ENCODE measurements at regions of chr16 and their contacts with region 1.

Region 1: GRCh38 chr16:81366316-81366932 is 51.7 kb downstream of the GAN start:
- DNase-seq: peak in 4 of 5 donors; percentile 48 to 59 (median 54)
- H3K4me3 ChIP-seq: no peak overlapping the region
- H3K4me3 Mint-ChIP-seq: no peak overlapping the region
- H3K27ac ChIP-seq: no peak overlapping the region
- H3K27ac Mint-ChIP-seq: no peak overlapping the region
- H3K4me1 ChIP-seq: no peaks in the 10 kb centered on the region
- H3K4me1 Mint-ChIP-seq: no peaks in the 10 kb centered on the region
- H3K27me3 ChIP-seq: no peaks in the 10 kb centered on the region
- H3K27me3 Mint-ChIP-seq: no peaks in the 10 kb centered on the region

Region 2: DNA sequence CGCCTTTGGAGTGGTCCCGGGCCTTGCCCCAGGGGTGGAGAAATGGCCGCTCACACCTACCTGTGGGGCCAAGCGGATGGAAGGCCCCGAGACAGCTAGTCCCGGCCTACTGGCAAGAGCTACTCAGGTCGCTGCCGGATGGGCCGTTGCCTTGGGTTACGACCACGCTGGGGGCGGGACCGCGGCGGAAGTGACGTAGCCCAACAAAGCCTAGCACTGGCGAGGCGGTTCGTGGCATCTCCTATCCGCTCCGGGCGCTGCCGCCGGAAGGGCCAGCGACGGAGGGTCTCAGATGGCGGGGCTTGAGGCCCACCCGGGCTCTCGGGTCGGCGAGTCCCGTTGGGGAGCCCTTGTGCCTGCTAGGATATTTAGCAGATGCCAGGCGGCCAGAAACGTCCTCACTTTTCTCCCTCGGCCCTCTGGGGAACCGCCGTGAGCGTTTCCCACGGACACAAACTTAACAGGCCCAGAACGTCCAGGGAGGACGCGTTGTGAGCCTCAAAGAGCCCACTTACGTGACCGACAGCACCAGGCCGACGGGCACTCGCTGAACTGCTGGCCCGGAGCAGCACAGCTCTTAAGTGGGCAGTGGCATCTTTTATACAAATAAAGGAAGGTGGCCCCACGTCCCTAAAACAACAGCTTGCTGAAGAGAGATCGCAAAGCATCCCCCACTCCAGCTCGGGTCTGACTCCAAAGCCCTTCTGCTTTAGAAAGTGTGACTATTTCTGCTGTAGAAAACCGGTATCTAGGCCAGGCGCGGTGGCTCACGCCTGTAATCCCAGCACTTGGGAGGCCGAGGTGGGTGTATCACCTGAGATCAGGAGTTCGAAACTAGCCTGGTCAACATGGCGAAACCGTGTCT is 289.1 kb before region 1 on chr16 and contains the start of gene C16orf46:
- CTCF ChIA-PET with region 1: no interaction called
- POLR2A ChIA-PET with region 1: no interaction called
- intact Hi-C with region 1: no loop called
- DNase-seq: peak; percentile 96 to 99 (median 96)
- H3K4me3 ChIP-seq: peak within 1 kb of the TSS; percentile 59 to 75
- H3K4me3 Mint-ChIP-seq: peak within 1 kb of the TSS in 1 of 8 donors; percentile 20
- H3K27ac ChIP-seq: peak within 1 kb of the TSS; percentile 95
- H3K27ac Mint-ChIP-seq: peak within 1 kb of the TSS in 2 of 7 donors; percentile 25 to 66
- H3K4me1 ChIP-seq: peaks cover 13% of the 10 kb centered on the region
- H3K4me1 Mint-ChIP-seq: peaks cover 0 to 4% (median 1%) of the 10 kb centered on the region in 4 donors
- H3K27me3 ChIP-seq: no peaks in the 10 kb centered on the region
- H3K27me3 Mint-ChIP-seq: no peaks in the 10 kb centered on the region
- total RNA-seq, gene C16orf46: 0.29 TPM in 1 of 2 experiments, not detected in the other

Region 3: GRCh38 chr16:81403616-81404373 is 37.4 kb after region 1 on chr16:
- CTCF ChIA-PET with region 1: interaction called, 4 read pairs
- POLR2A ChIA-PET with region 1: no interaction called
- intact Hi-C with region 1: loop called (anchors 1 kb)
- DNase-seq: peak; percentile 63 to 77 (median 69)
- H3K4me3 ChIP-seq: peak overlapping the region in 1 of 2 donors; percentile 34
- H3K4me3 Mint-ChIP-seq: peak overlapping the region in 3 of 8 donors; percentile 10 to 46 (median 31)
- H3K27ac ChIP-seq: no peak overlapping the region
- H3K27ac Mint-ChIP-seq: no peak overlapping the region
- H3K4me1 ChIP-seq: peaks cover 8% of the 10 kb centered on the region
- H3K4me1 Mint-ChIP-seq: peaks cover 0 to 4% (median 0%) of the 10 kb centered on the region in 4 donors
- H3K27me3 ChIP-seq: no peaks in the 10 kb centered on the region
- H3K27me3 Mint-ChIP-seq: no peaks in the 10 kb centered on the region

Region 4: DNA sequence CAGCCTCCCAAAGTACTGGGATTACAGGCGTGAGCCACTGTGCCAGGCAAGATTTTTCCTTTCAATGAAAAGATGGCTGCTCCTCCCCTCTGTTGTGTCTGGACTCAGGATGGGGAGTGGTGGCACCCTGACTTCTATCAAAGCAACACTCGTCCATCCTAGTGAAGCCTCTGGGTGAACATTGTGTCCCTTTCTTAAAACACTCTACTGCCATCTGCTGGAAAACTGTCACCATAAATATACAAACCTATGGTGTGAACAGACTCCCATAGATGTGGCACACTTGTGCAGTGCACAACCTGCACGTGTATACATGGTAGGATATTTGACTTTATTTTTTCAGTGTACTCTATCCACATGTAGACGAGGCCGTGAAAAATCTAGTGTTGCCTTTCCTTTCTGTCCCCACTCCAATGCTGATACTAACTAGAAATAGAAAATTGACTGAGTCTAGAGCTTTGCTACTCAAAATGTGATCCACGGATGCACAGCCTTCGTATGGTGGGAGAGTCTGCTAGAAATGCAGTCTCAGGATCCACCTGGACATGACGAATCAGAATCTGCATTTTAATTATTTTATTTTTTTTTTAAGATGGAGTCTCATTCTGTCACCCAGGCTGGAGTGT is 356.8 kb after region 1 on chr16:
- CTCF ChIA-PET with region 1: interaction called, 11 read pairs
- POLR2A ChIA-PET with region 1: no interaction called
- intact Hi-C with region 1: loop called (anchors 1 kb)
- DNase-seq: peak; percentile 61 to 76 (median 73)
- H3K4me3 ChIP-seq: no peak overlapping the region
- H3K4me3 Mint-ChIP-seq: peak overlapping the region in 1 of 8 donors; percentile 52
- H3K27ac ChIP-seq: no peak overlapping the region
- H3K27ac Mint-ChIP-seq: peak overlapping the region in 4 of 7 donors; percentile 14 to 84 (median 70)
- H3K4me1 ChIP-seq: peaks cover 11% of the 10 kb centered on the region
- H3K4me1 Mint-ChIP-seq: peaks cover 11 to 29% (median 13%) of the 10 kb centered on the region in 4 donors
- H3K27me3 ChIP-seq: no peaks in the 10 kb centered on the region
- H3K27me3 Mint-ChIP-seq: no peaks in the 10 kb centered on the region

Region 5: DNA sequence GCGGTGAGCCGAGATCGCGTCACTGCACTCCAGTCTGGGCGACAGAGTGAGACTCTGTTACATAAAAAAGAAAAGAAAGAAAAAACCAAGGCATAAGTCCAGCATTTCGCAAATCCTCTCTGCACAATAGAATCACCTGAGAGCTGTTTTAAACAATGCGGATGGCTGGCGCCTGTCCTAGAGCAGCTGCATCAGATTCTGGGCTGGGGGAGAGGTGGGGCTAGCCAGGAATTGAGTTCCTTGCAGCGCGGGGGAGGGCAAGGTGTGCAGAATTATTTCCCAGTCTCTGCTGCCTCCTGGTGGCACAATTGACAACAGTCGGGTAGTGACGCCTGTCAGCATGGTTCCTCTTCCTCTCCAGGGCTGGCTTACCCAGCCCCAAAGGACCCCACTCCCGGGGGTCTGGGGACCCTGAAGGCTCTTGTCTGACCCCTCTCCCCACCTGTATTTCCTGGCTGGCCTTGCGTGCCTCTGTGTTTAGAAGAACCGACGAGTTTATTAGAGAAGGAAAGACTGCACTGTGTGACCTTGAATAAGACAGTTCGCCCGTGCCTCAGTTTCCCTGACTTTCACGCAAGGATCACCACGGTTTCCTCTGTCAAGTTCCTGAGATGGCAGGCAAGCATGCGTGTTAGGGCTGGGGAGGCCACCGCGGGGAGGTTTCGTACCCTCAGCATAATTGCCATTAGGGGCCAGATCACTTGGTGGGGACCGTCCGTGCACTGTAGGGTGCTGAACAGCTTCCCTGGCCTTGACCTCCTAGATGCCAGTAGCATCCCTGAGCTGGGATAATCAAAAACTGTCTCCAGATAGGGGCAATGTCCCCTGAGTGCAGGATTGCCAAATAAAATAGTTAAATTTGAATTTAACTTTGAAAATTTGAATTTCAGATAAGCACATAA is 371.7 kb after region 1 on chr16:
- CTCF ChIA-PET with region 1: interaction called, 54 read pairs
- POLR2A ChIA-PET with region 1: no interaction called
- intact Hi-C with region 1: no loop called
- DNase-seq: peak; percentile 80 to 84 (median 81)
- H3K4me3 ChIP-seq: peak overlapping the region in 1 of 2 donors; percentile 3
- H3K4me3 Mint-ChIP-seq: peak overlapping the region; percentile 67 to 82 (median 75)
- H3K27ac ChIP-seq: no peak overlapping the region
- H3K27ac Mint-ChIP-seq: peak overlapping the region in 5 of 7 donors; percentile 22 to 78 (median 30)
- H3K4me1 ChIP-seq: peaks cover 4% of the 10 kb centered on the region
- H3K4me1 Mint-ChIP-seq: peaks cover 0 to 12% (median 7%) of the 10 kb centered on the region in 4 donors
- H3K27me3 ChIP-seq: no peaks in the 10 kb centered on the region
- H3K27me3 Mint-ChIP-seq: no peaks in the 10 kb centered on the region

Region 6: DNA sequence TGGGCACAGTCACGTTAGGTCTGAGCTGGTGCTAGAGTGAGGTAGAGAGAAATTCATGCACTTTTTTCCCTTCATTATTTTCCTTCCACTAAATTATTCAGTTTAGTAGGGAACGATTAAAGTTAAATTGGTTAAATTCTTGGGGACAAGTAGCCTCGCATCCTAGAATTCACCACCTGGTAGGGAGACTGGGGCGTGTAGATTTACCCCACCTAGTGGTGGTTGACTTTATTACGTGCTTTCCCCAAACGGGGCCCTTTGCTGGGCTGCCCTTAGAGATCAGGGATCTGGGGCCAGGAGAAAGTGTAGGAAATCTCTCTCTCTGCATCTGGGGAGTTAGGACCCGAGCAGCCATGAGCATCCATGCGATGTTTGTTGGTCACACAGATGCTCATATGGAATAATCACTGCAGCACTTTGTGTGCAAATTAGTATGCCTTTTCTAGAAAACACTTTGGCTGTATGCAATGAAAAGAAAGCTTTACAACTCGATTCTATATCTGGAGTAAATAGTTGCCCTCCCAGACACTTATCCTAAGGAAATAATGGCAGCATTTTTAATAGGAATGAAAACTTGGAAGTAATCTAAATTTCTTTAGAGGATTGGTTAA is 519.7 kb after region 1 on chr16:
- CTCF ChIA-PET with region 1: interaction called, 3 read pairs
- POLR2A ChIA-PET with region 1: no interaction called
- intact Hi-C with region 1: loop called (anchors 5 kb)
- DNase-seq: no peak
- H3K4me3 ChIP-seq: no peak overlapping the region
- H3K4me3 Mint-ChIP-seq: no peak overlapping the region
- H3K27ac ChIP-seq: no peak overlapping the region
- H3K27ac Mint-ChIP-seq: no peak overlapping the region
- H3K4me1 ChIP-seq: no peaks in the 10 kb centered on the region
- H3K4me1 Mint-ChIP-seq: no peaks in the 10 kb centered on the region
- H3K27me3 ChIP-seq: no peaks in the 10 kb centered on the region
- H3K27me3 Mint-ChIP-seq: peaks cover 0 to 2% of the 10 kb centered on the region in 2 donors